ENCODE measurements at regions of chr17 and their contacts with region 1.

Region 1: DNA sequence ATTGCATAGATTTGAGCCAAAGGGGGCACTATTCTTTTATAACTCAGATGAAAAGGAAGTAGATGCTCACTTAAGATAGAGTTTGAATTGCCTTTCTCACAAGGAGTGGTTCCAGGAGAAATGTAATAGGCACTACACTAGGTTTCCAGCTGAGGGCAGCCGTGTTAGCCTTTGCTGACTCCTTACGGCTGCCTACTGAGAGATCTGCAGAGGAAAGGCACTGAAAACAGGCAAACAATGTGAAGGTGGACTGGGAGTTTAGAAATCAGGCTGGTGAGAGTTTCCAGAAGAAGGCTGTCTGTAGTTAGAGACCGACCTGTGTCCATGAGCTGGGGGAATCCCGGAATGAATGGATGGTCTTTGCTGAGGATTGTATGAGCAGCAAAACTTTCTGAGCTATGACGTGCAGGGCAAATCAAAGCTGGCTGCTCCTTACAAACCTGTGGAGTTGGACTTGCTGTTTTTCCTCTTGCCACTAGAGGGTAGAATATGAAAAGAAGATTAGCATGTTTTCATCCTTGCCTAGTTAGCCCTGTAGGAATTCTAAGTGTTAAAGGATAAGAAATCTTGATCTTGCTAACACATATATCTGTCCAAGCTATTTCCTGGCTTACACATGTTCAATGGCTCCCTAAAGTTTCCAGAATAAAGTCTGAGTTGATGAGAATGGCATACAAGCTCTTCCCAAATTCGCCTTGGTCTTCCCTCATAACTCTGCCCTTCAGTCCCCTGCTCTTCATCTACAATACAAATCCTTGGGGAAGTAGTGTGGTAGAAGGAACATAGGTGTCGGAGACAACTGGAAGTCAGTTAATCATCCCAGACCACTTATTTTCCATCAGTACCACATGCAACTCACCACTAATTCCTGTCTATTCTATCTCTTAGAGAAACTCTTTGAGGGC is 20.1 kb upstream of the TAOK1 start:
- DNase-seq: no peak

Region 2: GRCh38 chr17:29469276-29469675 is 99.2 kb after region 1 on chr17:
- intact Hi-C with region 1: loop called (anchors 10 kb)
- DNase-seq: no peak

Region 3: DNA sequence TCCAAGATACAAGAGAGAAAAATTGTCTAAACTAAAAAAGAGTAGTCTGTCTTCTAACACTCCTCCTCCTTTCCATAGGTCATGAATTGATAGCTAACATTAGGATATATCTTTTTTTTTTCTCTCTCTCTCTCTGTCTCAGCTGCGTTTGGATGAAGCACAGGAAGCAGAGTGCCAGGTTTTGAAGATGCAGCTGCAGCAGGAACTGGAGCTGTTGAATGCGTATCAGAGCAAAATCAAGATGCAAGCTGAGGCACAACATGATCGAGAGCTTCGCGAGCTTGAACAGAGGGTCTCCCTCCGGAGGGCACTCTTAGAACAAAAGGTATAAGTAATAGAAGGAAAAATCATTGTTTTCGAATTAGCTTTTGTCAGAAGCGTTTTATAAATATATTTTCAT is 163.9 kb after region 1 on chr17:
- intact Hi-C with region 1: loop called (anchors 1 kb)
- DNase-seq: no peak

Measured in cardiac septum (tissue), 1 donor.